WTC11 (cell line): ENCODE measurements at regions of chr1 and their contacts with region 1.

Region 1: GRCh38 chr1:38256072-38256471 is 209.5 kb upstream of the POU3F1 start:
- DNase-seq: peak; percentile 45
- ATAC-seq: peak; percentile 68
- H3K4me3 Mint-ChIP-seq: no peak overlapping the region
- H3K27ac Mint-ChIP-seq: no peak overlapping the region
- H3K4me1 Mint-ChIP-seq: peaks cover 24% of the 10 kb centered on the region
- H3K27me3 Mint-ChIP-seq: peaks cover 3% of the 10 kb centered on the region
- CTCF ChIP-seq: no peak

Region 2: DNA sequence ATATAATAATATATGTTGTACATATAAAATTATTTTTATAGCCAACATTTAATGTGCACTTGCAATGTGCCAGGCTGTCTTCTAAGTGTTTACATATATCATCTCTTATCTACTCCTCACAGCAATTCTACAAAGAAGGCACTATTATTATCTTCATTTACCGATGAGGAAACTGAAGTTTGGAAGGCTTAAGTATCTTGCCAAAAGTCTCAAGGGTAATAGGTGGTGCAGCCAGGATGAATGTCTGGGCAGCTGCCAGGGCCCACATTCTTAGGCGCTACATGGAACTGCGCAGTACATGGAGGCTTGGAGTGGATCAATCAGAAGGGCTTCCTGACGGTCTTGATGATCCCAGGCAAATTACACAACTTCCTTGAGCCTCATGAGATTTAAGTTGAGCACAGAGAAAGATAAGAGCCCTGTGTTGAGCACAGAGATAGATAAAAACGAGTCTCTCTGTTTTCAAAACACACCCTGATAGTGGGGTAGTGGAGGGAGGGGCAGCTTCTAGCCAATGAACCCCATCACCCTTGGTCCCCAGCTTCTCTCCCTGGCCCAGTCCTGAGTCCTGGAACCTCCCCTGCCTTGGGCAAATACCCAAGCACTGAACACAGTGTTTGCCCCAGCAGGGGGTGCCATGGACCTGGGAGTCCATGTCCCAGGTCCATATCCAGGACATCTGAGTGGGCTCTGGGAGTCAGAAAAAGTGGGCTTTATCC is 218.7 kb before region 1 on chr1:
- CTCF ChIA-PET with region 1: no interaction called
- POLR2A ChIA-PET with region 1: interaction called, 11 read pairs
- DNase-seq: no peak
- ATAC-seq: no peak
- H3K4me3 Mint-ChIP-seq: no peak overlapping the region
- H3K27ac Mint-ChIP-seq: no peak overlapping the region
- H3K4me1 Mint-ChIP-seq: peaks cover 13% of the 10 kb centered on the region
- H3K27me3 Mint-ChIP-seq: peaks cover 6% of the 10 kb centered on the region
- CTCF ChIP-seq: no peak